Activated CD4-positive, alpha-beta T cell treated with anti-CD3 and anti-CD28 coated beads for 36 hours (primary cell): ENCODE measurements at regions of chr6 and their contacts with region 1.

Region 1: DNA sequence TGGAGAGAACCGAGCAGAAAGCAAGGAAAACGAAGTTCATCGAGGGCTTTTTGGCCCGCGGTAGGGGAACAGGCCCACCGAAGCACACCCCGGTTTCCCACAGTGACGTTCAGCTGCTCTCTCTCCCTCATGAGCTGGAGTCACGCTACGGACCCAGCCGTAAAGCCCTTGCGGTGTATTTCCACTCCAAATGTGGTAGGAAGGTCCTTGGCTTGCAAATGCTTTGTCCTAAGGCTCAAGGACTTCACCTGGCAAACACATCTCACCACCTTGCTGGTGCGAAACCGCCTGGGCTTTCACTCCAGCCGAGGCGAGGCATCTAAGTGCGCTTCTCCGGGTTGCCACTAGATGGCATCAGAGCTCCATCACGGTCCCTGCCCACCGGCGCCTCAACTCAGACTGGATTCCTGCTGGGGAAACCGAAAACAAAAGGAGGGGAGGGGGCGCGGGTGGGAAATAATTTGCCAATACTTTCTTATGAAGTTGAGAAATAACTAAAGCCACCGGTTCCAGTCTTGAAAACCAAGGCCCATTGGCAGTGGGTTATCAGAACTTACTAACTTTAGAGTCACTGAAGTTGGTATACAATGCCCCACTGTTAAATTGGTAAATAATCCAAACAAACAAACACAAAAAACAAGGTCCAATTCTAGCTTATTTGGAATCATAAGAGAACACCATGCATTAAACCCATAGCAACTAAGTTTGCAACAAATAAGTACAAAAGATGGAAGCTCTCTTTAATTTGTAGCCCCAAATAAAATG is 13.4 kb upstream of the FOXC1 start:
- DNase-seq: peak; percentile 78
- ATAC-seq: peak; percentile 88
- H3K4me3 Mint-ChIP-seq: no peak overlapping the region
- H3K27ac Mint-ChIP-seq: no peak overlapping the region
- H3K4me1 Mint-ChIP-seq: peaks cover 2% of the 10 kb centered on the region
- H3K27me3 Mint-ChIP-seq: peaks cover 48% of the 10 kb centered on the region

Region 2: GRCh38 chr6:1524040-1524480 is 72.2 kb before region 1 on chr6:
- CTCF ChIA-PET with region 1: interaction called, 12 read pairs
- POLR2A ChIA-PET with region 1: no interaction called
- intact Hi-C with region 1: no loop called
- DNase-seq: peak; percentile 90
- ATAC-seq: peak; percentile 76
- H3K4me3 Mint-ChIP-seq: peak overlapping the region; percentile 56
- H3K27ac Mint-ChIP-seq: peak overlapping the region; percentile 78
- H3K4me1 Mint-ChIP-seq: peaks cover 48% of the 10 kb centered on the region
- H3K27me3 Mint-ChIP-seq: peaks cover 7% of the 10 kb centered on the region

Region 3: DNA sequence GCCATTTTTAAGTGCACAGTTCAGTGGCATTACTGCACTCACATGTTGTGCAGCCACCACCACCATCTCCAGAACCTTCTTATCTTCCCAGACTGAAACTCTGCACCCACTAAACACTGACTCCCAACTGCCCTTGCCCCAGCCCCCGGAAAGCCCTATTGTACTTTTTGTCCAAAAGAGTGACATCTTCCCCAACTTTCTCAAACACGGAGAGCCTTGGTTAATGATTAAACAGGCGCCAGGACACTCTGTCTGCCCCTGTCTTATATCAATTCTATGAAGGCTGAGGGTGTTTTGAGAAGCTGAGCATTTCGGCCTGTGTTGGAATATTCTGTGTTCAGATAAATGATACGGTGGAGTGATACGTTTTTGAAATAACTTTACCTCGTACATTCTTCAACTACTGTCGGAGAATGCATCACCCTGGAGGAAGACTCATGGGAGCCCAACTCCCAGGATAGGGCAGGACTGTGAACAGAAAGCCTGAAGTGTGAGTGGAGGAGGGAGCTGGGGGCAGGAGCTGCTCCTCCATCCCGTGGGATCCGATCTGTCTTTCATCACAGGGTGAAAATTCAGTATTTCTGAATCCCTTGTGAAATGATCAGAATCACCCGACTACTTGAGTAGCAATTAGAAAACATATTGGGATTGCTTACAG is 55.3 kb before region 1 on chr6:
- CTCF ChIA-PET with region 1: no interaction called
- POLR2A ChIA-PET with region 1: no interaction called
- intact Hi-C with region 1: no loop called
- DNase-seq: no peak
- ATAC-seq: no peak
- H3K4me3 Mint-ChIP-seq: no peak overlapping the region
- H3K27ac Mint-ChIP-seq: no peak overlapping the region
- H3K4me1 Mint-ChIP-seq: peaks cover 15% of the 10 kb centered on the region
- H3K27me3 Mint-ChIP-seq: no peaks in the 10 kb centered on the region

Region 4: DNA sequence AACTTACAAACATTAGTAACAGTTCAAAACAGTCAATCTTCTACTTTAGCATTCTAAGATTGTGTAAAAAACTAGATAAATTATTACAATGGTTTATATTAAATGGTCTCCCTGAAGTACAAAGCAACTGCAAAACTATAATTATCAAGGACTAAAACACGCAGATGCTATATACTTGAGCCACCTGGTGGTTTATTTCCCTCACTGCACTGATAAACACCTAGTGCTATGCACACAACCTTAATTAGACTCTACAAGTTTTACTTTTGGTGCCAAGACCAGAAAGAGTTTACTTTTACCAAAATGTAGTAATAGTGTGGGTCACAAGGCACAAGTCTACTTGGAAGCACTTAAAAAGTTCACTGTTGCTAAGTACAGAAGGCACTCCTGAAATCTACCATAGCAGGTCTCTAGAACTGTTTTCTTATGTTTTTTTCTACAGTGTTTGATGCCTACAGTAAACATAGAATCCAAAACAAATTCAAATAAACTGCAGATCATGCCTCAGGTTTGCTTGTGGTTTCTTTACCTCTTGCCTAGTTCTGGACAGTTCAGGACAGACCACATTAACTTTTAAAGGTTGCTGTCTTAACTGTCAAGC is 599.9 kb after region 1 on chr6:
- CTCF ChIA-PET with region 1: interaction called, 5 read pairs
- POLR2A ChIA-PET with region 1: no interaction called
- intact Hi-C with region 1: loop called (anchors 2 kb)
- DNase-seq: peak; percentile 34
- ATAC-seq: peak; percentile 76
- H3K4me3 Mint-ChIP-seq: no peak overlapping the region
- H3K27ac Mint-ChIP-seq: no peak overlapping the region
- H3K4me1 Mint-ChIP-seq: no peaks in the 10 kb centered on the region
- H3K27me3 Mint-ChIP-seq: peaks cover 2% of the 10 kb centered on the region

Region 5: DNA sequence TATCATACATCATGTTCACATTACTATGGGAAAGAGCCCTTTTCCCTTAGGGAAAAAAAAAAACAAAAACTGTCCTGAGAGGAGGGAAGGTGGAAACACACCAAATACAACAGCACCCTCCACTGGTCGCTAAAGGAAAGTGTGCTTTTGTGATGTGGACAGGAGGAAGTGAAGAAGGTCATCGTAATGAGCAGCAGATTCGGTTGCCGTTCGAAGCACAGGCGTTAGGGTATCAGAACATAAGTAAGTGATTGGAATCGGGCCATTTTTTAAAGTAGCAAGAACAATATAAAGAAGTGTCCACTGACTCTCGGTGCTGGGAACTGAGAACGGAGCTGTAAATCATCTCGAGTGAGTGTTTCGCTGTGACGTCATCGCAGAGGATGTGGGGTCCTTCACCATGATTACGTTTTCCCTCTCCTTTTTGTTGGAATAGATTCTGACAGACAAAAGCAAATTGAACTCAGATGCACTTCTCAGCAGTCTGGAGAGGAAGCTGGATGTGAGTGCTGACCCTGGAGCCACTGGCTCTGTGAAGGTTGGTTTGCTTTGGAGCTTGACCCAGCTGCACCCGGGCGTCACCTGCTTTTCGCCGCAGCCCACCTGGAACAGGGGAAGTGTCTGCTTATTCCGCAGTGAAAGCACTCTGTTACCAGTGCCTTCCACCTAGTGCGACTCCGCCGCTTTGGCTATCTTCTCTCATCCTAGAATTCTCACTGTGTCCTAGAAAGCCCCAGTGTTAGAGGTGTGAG is 852.7 kb after region 1 on chr6:
- CTCF ChIA-PET with region 1: interaction called, 8 read pairs
- POLR2A ChIA-PET with region 1: no interaction called
- intact Hi-C with region 1: loop called (anchors 2 to 5 kb)
- DNase-seq: peak; percentile 41
- ATAC-seq: peak; percentile 23
- H3K4me3 Mint-ChIP-seq: peak overlapping the region; percentile 24
- H3K27ac Mint-ChIP-seq: no peak overlapping the region
- H3K4me1 Mint-ChIP-seq: peaks cover 3% of the 10 kb centered on the region
- H3K27me3 Mint-ChIP-seq: peaks cover 5% of the 10 kb centered on the region

Region 6: DNA sequence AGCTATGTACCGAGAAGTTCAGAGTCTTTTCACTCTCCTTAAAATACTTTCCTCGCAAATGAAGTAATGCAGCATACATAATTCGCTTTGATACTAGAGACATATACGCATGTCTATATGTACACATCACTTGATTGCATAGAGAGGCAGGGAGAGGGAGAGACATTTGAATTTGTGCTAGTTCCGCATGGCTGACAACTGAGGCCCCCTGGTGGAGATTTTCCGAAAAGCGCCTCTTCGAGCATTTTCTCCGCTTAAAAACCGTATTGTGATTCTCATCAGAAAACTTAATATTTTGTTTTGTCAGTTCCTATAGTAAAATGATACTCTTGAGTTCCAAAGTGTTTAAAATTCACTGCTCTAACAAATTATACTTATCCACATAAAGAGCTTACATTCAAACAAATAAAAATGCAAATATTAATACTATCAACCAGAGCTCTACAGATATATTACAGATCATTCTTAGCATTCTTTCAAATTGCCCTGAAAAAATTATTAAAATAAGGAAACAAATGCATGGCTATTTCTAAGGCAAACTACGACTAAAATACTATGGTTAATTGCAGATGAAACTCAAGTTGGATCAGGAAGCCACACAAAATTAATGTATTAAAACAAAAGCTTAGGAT is 1153.8 kb after region 1 on chr6:
- CTCF ChIA-PET with region 1: interaction called, 15 read pairs
- POLR2A ChIA-PET with region 1: no interaction called
- intact Hi-C with region 1: loop called (anchors 1 to 5 kb)
- DNase-seq: peak; percentile 83
- ATAC-seq: peak; percentile 66
- H3K4me3 Mint-ChIP-seq: no peak overlapping the region
- H3K27ac Mint-ChIP-seq: no peak overlapping the region
- H3K4me1 Mint-ChIP-seq: peaks cover 3% of the 10 kb centered on the region
- H3K27me3 Mint-ChIP-seq: peaks cover 8% of the 10 kb centered on the region